ENCODE measurements at regions of chr17 and their contacts with region 1.

Region 1: DNA sequence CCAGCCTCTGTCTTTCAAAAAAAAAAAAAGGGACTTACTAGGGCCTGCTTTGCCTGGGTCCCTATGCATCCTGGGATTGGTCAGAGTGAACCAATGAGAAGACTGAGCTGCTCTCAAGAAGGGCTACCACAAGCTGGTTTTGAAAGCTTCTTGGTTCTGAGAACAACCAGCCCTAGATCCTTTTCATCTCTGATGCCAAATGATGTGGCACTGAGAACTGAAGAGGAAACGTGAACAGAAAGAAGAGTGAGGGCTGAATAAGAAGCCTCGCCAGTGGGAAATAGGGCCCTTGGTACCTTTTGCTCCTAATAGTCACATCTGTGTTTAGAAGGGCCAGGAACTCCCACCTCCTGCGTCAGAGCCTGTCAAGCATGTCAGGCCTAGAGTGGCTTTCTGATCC is 10.7 kb downstream of the TACO1 start:
- DNase-seq: peak; percentile 48
- ATAC-seq: peak; percentile 81
- H3K4me3 Mint-ChIP-seq: no peak overlapping the region
- H3K27ac Mint-ChIP-seq: peak overlapping the region; percentile 84
- H3K4me1 Mint-ChIP-seq: peaks cover 29% of the 10 kb centered on the region
- H3K27me3 Mint-ChIP-seq: no peaks in the 10 kb centered on the region
- CTCF ChIP-seq: no peak

Region 2: GRCh38 chr17:63413128-63413527 is 198.2 kb before region 1 on chr17:
- CTCF ChIA-PET with region 1: interaction called, 13 read pairs
- POLR2A ChIA-PET with region 1: interaction called, 3 read pairs
- intact Hi-C with region 1: no loop called
- DNase-seq: no peak
- ATAC-seq: no peak
- H3K4me3 Mint-ChIP-seq: no peak overlapping the region
- H3K27ac Mint-ChIP-seq: no peak overlapping the region
- H3K4me1 Mint-ChIP-seq: no peaks in the 10 kb centered on the region
- H3K27me3 Mint-ChIP-seq: no peaks in the 10 kb centered on the region
- CTCF ChIP-seq: no peak

Region 3: DNA sequence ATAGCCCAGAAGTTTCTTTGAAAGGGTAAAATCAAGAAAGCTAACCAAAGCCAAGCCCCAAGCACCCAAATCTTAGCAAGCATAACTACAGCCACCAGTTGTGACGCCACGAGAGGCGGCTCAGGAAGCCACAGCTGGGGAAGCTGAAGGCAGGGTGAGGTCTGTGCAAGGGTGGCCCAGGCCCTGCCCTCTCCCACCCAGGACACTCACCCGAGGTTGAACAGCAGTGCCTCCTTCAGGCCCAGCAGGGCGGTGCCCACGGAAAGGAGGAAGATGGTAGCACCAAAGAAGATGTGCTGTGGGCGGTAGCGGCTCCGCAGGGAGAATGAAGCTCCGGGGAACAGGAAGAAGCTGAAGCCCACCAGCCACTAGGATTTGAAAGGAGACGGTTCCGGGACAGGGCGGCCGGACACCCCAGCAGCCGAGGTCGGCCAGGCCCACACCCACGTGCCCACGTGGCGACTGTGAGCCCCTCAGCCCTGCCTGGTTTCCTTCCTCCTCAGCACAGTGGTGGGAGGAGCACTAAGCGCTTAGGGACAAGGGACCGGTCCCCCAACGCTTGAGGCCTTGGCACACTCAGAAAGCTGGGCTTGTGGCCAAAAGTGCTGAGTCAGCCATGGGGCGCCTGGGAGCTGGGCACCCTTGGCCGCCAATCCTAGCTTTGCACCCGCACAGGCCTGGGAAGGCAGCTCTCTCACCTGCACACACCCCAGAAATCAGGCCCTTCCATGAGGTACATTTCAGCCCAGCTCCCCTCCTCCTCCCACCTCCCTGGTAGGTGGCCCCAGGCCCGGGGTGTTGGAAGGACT is 176.3 kb before region 1 on chr17:
- CTCF ChIA-PET with region 1: interaction called, 188 read pairs
- POLR2A ChIA-PET with region 1: interaction called, 4 read pairs
- intact Hi-C with region 1: loop called (anchors 5 kb)
- DNase-seq: peak; percentile 58
- ATAC-seq: peak; percentile 71
- H3K4me3 Mint-ChIP-seq: peak overlapping the region; percentile 35
- H3K27ac Mint-ChIP-seq: peak overlapping the region; percentile 80
- H3K4me1 Mint-ChIP-seq: peaks cover 32% of the 10 kb centered on the region
- H3K27me3 Mint-ChIP-seq: no peaks in the 10 kb centered on the region
- CTCF ChIP-seq: no peak

Region 4: GRCh38 chr17:63549946-63550807 is 61.2 kb before region 1 on chr17 and contains the start of gene DCAF7:
- CTCF ChIA-PET with region 1: interaction called, 18 read pairs
- POLR2A ChIA-PET with region 1: interaction called, 4 read pairs
- intact Hi-C with region 1: no loop called
- DNase-seq: peak; percentile 100
- ATAC-seq: peak; percentile 96
- H3K4me3 Mint-ChIP-seq: peak within 1 kb of the TSS; percentile 92
- H3K27ac Mint-ChIP-seq: peak within 1 kb of the TSS; percentile 96
- H3K4me1 Mint-ChIP-seq: peaks cover 32% of the 10 kb centered on the region
- H3K27me3 Mint-ChIP-seq: no peaks in the 10 kb centered on the region
- CTCF ChIP-seq: no peak
- total RNA-seq, gene DCAF7: 104 to 105 TPM

Region 5: DNA sequence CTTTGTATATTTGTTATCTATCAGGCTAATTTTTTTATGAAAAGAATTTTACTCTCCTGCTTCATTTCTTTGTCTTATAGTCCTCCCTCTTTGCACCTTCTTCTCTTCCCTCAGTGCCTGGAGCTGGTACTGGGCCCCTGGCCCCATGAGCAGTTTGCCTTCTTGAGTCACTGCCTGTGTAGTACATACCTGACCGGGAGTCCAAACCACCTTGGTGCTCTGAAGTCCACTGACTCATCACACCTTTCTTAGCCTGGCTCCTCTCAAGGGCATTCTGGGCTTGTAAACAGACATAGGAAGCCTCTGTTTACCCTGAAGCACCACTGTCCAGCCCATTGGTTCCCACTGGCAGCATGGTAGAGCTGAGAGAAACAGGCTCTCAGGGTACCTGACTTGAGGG is 21.7 kb before region 1 on chr17:
- CTCF ChIA-PET with region 1: interaction called, 15 read pairs
- POLR2A ChIA-PET with region 1: no interaction called
- intact Hi-C with region 1: no loop called
- DNase-seq: no peak
- ATAC-seq: no peak
- H3K4me3 Mint-ChIP-seq: no peak overlapping the region
- H3K27ac Mint-ChIP-seq: no peak overlapping the region
- H3K4me1 Mint-ChIP-seq: peaks cover 15% of the 10 kb centered on the region
- H3K27me3 Mint-ChIP-seq: no peaks in the 10 kb centered on the region
- CTCF ChIP-seq: no peak

Region 6: DNA sequence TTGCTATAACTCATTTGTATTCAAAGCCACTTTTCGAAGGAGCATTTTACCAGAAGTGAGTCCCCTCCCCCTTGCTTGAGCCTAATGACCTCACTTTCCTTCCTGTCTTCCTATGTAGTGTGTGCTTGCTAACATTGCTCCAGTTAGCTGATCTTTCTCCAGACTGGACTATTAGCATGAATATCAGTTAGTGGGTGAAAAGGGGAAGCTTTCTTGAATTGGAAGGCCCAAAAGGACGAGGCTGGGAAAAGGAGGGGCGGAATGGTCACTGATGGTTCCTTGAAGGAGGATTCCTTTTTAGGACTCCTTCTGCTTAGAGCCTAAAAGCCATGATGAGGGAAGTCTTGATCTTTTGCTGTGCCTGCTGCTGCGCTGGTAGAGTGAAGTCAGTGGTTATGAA is 22.8 kb after region 1 on chr17:
- CTCF ChIA-PET with region 1: interaction called, 16 read pairs
- POLR2A ChIA-PET with region 1: interaction called, 3 read pairs
- intact Hi-C with region 1: no loop called
- DNase-seq: no peak
- ATAC-seq: peak; percentile 51
- H3K4me3 Mint-ChIP-seq: no peak overlapping the region
- H3K27ac Mint-ChIP-seq: peak overlapping the region; percentile 26
- H3K4me1 Mint-ChIP-seq: peaks cover 20% of the 10 kb centered on the region
- H3K27me3 Mint-ChIP-seq: no peaks in the 10 kb centered on the region
- CTCF ChIP-seq: no peak

Measured in activated CD8-positive, alpha-beta T cell treated with anti-CD3 and anti-CD28 coated beads for 36 hours (primary cell).